Activated T-helper 1 cell treated with anti-CD3 and anti-CD28 coated beads, Interleukin-12 subunit alpha, Interleukin-12 subunit beta, Interleukin-2, Interleukin-4 antibody, amounts not matched to agents 30 ng/mL and 10 ng/mL and 1 ng/mL, durations not matched to agents 14 hours and 24 hours and 36 hours (primary cell): ENCODE measurements at regions of chr9 and their contacts with region 1.

Region 1: DNA sequence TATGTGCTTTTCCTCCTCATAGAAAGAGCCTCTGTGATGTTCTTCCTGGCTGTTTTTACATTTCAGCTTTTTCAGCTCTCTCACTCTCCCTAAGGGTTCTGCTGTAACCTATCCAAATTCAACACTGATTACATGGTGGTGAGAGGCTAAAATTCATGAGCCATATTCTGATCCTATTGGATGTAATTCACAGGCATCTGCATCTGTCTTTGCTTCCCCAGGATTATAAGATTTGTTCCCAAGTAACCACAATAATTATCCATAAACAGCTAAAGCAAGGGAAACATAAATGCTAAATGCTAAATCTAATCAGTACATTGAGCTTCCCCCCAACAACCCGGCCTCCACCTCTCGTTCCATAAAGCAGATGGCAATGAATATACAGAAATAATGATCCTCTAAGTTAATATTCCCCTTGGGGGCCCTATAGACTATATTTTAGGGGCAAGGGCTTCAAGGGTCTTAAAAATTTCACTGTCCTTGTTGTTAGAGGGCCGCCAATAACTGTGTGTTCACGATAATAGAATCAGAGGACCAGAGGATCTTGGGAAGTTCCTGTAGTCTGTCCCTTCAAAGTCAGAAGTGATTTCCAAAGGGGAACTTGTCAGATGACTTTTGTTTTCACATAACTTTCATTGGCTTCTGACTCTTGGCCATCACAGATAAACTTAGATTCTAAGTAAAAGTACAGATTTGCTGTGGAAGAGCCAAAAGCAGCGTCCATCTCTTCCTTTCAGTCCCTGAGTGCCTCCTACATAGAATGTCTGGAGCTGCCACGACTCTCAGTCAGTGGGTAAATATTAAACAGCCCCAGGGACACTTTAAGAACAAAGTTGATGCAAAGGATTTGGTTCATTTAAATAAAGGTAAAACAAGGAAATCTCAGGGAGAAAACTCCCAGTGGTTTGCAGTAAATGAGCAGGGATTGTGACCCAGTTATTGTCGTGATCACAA is 125.6 kb downstream of the ALDH1A1 start:
- DNase-seq: no peak
- H3K4me3 Mint-ChIP-seq: no peak overlapping the region
- H3K27ac Mint-ChIP-seq: no peak overlapping the region
- H3K4me1 Mint-ChIP-seq: no peaks in the 10 kb centered on the region
- H3K27me3 Mint-ChIP-seq: peaks cover 2% of the 10 kb centered on the region

Region 2: GRCh38 chr9:72038890-72039410 is 788.3 kb before region 1 on chr9:
- intact Hi-C with region 1: loop called (anchors 1 kb)
- DNase-seq: peak; percentile 36
- H3K4me3 Mint-ChIP-seq: no peak overlapping the region
- H3K27ac Mint-ChIP-seq: no peak overlapping the region
- H3K4me1 Mint-ChIP-seq: peaks cover 6% of the 10 kb centered on the region
- H3K27me3 Mint-ChIP-seq: peaks cover 11% of the 10 kb centered on the region

Region 3: GRCh38 chr9:72271613-72272478 is 555.4 kb before region 1 on chr9:
- intact Hi-C with region 1: loop called (anchors 2 kb)
- DNase-seq: no peak
- H3K4me3 Mint-ChIP-seq: no peak overlapping the region
- H3K27ac Mint-ChIP-seq: no peak overlapping the region
- H3K4me1 Mint-ChIP-seq: no peaks in the 10 kb centered on the region
- H3K27me3 Mint-ChIP-seq: peaks cover 15% of the 10 kb centered on the region

Region 4: DNA sequence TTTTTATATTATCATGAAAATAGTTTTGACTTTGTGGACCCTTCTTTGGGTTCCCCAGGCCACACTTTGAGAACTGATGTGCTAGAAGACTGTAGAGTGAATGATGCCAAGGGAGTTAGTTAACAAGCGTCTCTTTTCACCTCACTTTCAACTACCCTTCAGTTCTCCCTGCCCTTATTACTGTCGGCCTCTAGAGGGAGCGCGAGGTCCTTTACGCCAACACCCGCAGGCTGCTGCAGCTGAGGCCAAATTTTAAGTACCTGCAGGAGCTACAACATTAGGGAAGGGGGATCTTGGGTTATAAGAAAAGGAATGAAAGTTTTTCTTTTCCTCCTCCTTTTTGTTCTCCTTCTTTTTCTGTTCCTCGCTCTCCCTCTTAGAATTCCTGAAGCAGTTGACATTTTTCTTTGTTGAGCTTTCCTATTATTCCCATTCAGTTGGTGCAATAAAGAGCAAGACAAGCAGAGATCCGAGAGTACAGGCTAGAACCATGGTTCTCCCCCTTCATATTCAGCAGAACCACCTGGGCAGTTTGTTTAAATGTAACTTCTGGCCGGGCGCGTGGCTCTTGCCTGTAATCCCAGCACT is 546.3 kb before region 1 on chr9:
- intact Hi-C with region 1: loop called (anchors 1 kb)
- DNase-seq: peak; percentile 52
- H3K4me3 Mint-ChIP-seq: no peak overlapping the region
- H3K27ac Mint-ChIP-seq: peak overlapping the region; percentile 36
- H3K4me1 Mint-ChIP-seq: no peaks in the 10 kb centered on the region
- H3K27me3 Mint-ChIP-seq: peaks cover 6% of the 10 kb centered on the region

Region 5: DNA sequence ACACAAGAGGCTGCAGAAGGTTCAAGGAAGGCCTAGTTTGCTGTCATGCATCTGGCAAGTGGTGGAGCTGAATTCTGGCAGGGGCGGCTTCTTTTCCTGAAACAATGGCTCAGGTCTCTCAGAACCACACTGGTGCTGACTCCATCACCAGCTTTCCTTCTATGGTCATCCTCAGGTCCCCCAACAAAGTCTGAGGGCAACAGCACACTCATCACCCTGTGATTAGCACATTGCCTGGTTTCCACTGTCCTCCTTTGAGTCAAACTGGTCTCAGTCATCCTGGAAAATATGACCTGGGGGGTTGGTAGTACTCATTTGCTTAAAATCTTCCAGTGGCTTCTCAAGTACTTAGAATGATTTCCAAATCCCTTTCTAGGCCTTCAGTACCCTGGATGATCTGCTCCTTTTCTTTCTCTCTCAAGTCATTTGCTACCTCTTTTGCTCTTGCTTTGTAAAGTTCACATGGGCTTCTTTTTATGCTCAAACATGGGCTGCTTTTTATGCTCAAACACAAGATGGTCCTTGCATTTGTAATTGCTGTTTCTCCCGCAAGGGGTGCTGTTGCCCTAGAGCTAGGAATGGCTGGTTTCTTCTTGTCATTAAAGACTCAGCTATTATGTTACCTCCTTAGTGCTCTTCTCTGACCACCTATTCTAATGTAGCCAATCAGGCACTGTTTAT is 19.4 kb before region 1 on chr9:
- intact Hi-C with region 1: no loop called
- DNase-seq: no peak
- H3K4me3 Mint-ChIP-seq: no peak overlapping the region
- H3K27ac Mint-ChIP-seq: no peak overlapping the region
- H3K4me1 Mint-ChIP-seq: no peaks in the 10 kb centered on the region
- H3K27me3 Mint-ChIP-seq: no peaks in the 10 kb centered on the region

Region 6: DNA sequence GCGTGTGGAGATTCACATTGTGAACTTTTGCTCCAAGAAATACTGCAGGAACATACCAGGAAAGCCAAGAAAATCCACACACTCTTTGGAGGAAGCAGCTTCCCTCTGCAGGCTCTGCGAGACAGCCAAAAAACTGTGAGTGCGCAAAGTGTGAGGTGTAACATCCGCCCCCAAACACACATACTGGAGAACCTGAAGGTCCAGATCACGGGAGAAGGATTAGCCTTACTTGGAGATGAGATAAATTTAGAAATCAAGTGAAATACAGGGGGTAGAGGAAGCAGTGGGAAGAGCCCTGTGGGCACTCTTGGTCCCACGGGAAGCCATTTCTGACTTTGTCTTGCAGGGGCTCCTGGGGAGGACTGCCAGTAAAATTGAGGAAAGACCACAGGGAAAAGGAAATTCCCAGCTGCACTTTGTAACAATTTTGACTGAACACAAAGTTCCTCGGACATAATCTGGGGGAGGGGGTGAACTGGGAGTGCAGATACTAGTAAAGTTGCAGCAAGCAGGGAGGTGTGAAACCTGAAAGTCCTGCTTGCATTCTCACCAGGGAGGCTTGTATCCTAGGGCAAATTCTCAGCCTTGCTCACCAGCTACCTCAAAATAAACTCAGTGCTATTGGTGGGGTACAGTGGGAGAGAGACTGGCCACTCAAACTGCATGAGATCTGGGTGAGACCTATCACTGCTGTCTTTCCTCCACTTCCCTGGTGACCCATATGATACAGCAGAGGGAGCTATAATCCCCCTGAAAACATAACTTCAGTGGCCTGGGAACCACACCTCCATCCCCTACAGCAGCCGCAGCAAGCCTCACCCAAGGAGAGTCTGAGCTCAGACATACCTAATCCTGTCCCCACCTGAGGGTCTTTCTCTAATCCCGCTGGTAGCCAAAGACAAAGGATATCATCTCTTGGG is 16.5 kb after region 1 on chr9:
- intact Hi-C with region 1: no loop called
- DNase-seq: no peak
- H3K4me3 Mint-ChIP-seq: no peak overlapping the region
- H3K27ac Mint-ChIP-seq: no peak overlapping the region
- H3K4me1 Mint-ChIP-seq: no peaks in the 10 kb centered on the region
- H3K27me3 Mint-ChIP-seq: no peaks in the 10 kb centered on the region